Activated CD8-positive, alpha-beta T cell treated with anti-CD3 and anti-CD28 coated beads, Interleukin-2, amount 10 ng/mL, durations not matched to agents 7 days and 5 days (primary cell): ENCODE measurements at regions of chr10 and their contacts with region 1.

Region 1: DNA sequence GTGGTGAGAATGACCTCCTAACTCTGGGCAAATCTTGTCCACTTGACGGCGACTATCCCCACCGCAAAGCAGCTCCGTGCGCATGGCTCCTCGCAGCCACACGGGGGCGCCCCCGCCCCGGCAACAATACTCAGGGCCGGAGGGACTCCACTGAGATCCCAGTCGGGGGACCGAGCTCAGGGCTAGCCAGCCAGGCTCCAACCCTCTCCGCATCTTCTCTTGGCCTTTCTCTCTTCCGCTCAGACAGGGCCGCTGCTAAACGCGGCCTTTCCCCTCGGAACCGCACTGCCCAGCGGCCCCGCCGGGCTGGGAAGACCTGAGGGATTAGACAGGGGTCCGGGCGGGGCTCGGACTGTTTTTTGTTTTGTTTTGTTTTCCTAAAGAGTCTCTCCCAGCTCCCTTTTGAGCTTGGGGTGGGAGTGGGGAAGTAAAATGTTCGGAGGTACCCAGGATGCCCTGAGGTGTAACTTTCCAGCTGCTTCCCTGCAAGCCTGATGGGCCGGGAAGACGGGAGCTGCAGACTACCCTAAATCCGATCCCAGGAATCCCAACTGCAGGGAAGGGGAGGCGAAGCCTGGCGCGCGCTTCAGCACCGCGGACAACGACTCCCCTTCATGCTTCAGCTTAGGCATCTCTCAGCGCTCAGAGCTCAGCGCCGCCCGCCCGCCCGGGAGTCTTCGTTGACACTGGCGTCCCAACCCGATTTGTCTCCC is 2.7 kb downstream of the KCNIP2 start:
- DNase-seq: peak; percentile 82
- ATAC-seq: peak; percentile 74
- H3K4me3 Mint-ChIP-seq: peak overlapping the region; percentile 74
- H3K27ac Mint-ChIP-seq: no peak overlapping the region
- H3K4me1 Mint-ChIP-seq: peaks cover 43% of the 10 kb centered on the region
- H3K27me3 Mint-ChIP-seq: peaks cover 17% of the 10 kb centered on the region

Region 2: DNA sequence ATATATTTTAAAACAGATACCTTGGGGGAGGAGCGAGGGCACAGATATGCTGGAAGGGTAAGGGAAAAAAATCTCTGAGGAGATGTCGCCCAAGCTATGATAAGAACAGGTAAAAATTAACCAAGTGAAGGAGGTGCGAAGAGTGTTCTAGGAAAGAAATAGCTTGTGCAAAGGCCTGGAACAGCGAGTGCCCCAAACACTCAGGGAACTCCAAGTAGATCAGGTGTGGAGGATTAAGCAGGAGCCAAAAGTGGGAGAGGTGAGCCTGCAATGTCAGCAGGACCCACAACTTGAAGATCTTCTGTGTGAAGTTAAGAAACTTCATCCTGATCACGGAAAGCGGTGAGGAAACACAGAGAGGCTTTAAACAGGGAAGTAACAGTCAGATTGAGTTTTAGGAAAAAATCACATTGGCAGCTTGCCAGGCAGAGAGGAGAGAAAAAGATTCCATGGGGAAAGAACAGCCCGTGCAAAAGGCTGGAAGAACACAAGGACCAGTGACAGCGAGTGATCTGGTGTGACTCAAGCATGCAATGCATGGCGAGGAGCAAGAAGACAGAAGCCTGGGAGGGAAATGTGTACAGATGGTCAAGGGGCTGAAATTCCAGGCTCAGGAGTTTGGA is 95.7 kb before region 1 on chr10:
- CTCF ChIA-PET with region 1: no interaction called
- POLR2A ChIA-PET with region 1: no interaction called
- DNase-seq: no peak
- ATAC-seq: no peak
- H3K4me3 Mint-ChIP-seq: no peak overlapping the region
- H3K27ac Mint-ChIP-seq: no peak overlapping the region
- H3K4me1 Mint-ChIP-seq: no peaks in the 10 kb centered on the region
- H3K27me3 Mint-ChIP-seq: peaks cover 22% of the 10 kb centered on the region

Region 3: GRCh38 chr10:101789686-101790085 is 51.2 kb before region 1 on chr10:
- CTCF ChIA-PET with region 1: no interaction called
- POLR2A ChIA-PET with region 1: no interaction called
- DNase-seq: no peak
- ATAC-seq: no peak
- H3K4me3 Mint-ChIP-seq: no peak overlapping the region
- H3K27ac Mint-ChIP-seq: no peak overlapping the region
- H3K4me1 Mint-ChIP-seq: peaks cover 3% of the 10 kb centered on the region
- H3K27me3 Mint-ChIP-seq: no peaks in the 10 kb centered on the region

Region 4: DNA sequence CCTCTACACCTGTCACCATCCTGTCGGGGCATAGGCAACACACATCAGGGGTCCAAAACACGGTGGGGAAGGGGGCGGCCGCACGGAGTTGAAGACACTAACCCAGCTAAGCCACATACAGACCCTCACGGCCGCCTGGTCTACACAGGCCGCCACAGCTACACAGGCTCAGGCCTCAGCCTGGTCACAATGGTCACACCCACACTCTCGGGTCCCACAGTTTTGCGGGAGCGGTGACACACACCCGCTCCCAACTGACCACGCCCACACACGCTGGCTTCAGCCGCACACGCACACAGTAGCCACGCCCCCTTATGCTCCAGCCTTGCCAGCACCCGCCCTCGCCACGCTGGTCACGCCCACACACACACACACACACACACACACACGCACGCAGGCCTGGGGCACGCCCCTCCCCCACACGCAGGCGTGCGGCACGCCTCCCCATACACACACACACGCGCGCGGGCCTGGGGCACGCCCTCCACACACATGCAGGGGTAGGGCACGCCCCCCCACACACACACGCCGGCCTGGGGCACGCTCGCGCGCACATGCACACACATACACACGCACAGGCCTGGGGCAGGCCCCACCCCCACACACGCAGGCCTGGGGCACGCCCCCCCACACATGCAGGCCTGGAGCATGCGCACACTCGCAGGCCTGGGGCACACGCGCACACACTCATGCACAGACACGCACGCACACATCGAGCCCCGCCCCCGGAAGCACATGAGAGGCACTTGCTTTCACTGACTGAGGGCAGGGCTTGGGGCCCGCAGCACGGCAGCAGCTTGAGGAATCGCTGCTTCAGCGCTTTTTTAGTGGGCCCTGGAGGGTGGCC is 10.4 kb before region 1 on chr10:
- CTCF ChIA-PET with region 1: interaction called, 17 read pairs
- POLR2A ChIA-PET with region 1: interaction called, 3 read pairs
- DNase-seq: peak; percentile 92
- ATAC-seq: peak; percentile 84
- H3K4me3 Mint-ChIP-seq: peak overlapping the region; percentile 66
- H3K27ac Mint-ChIP-seq: peak overlapping the region; percentile 82
- H3K4me1 Mint-ChIP-seq: peaks cover 52% of the 10 kb centered on the region
- H3K27me3 Mint-ChIP-seq: no peaks in the 10 kb centered on the region

Region 5: GRCh38 chr10:101879456-101880231 is 38.7 kb after region 1 on chr10:
- CTCF ChIA-PET with region 1: interaction called, 19 read pairs
- POLR2A ChIA-PET with region 1: no interaction called
- DNase-seq: no peak
- ATAC-seq: no peak
- H3K4me3 Mint-ChIP-seq: no peak overlapping the region
- H3K27ac Mint-ChIP-seq: no peak overlapping the region
- H3K4me1 Mint-ChIP-seq: peaks cover 15% of the 10 kb centered on the region
- H3K27me3 Mint-ChIP-seq: no peaks in the 10 kb centered on the region

Region 6: DNA sequence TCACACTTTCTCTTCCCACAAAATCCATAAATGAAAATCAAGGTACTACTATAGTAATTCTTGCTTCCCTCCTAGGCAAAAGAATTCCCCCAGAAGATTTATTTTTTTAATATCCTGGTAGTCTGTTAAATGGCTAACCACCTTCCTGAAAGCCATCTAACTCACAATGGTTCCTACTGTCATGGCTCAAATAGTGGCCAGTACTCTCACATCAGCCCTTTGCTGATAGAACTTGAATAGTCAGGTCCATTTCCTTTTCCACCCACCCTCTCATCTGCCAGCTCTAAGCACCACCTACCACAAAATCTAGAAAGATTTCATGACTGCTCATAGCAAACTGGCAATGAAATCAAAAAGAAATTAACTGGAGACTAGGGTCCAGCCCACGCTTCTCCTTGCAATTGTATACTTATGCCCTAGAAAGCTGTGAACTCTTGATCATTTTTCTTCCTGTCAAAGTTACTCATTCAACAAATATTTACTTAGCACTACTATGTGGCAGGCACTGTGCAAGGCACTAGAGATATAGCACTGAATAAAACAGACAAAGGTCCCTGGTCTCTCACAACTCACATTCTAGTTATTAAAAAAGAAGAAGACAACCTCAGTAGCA is 154.7 kb after region 1 on chr10:
- CTCF ChIA-PET with region 1: interaction called, 20 read pairs
- POLR2A ChIA-PET with region 1: no interaction called
- DNase-seq: no peak
- ATAC-seq: no peak
- H3K4me3 Mint-ChIP-seq: no peak overlapping the region
- H3K27ac Mint-ChIP-seq: no peak overlapping the region
- H3K4me1 Mint-ChIP-seq: no peaks in the 10 kb centered on the region
- H3K27me3 Mint-ChIP-seq: no peaks in the 10 kb centered on the region

Region 7: DNA sequence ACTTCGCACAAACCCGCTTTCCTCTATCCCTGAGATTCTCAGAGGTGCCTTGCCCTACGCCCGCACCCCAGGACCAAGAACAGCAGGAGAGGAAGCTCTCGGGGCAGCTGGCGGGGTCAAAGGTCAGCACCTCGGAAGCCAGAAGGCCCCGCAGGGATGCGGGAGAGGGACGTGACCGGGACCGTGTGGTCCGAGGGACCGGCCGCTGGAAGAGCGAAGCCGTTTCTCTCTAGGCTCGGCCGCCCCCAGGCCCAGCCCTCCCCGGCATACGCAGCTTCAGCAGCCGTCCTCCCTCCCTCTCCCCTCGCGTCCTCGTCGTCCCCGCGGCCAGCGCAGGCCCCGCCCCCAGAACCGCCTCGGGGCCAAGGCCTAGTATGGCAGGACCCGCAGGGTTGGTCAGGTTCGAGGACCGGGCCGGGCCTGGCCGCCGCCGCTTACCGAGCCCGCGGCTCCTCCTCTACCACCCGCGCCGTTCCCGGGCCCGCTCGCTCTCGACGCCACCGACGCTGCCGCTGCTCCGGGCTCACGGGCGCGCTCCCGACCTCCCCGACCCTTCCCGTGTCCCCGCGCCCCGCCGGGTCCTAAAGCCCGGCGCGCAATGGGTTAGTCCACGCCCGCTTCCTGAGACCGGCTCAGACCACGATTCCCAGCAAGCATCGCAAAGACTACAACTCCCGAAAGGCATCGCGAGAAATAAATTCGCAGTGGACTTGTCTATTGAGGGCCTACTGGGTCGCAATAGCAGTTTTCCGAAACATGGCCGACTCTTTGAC is 214.9 kb after region 1 on chr10 and contains the start of gene ARMH3:
- CTCF ChIA-PET with region 1: interaction called, 10 read pairs
- POLR2A ChIA-PET with region 1: no interaction called
- DNase-seq: peak; percentile 95
- ATAC-seq: peak; percentile 96
- H3K4me3 Mint-ChIP-seq: peak within 1 kb of the TSS; percentile 98
- H3K27ac Mint-ChIP-seq: peak within 1 kb of the TSS; percentile 98
- H3K4me1 Mint-ChIP-seq: peaks cover 39% of the 10 kb centered on the region
- H3K27me3 Mint-ChIP-seq: no peaks in the 10 kb centered on the region
- total RNA-seq, gene ARMH3: 25.2 to 26.3 TPM